ENCODE measurements at regions of chr10 and their contacts with region 1.

Region 1: GRCh38 chr10:75187961-75188426 is 22.6 kb upstream of the VDAC2 start:
- DNase-seq: no peak
- H3K4me3 ChIP-seq: no peak overlapping the region
- H3K27ac ChIP-seq: no peak overlapping the region
- H3K4me1 ChIP-seq: peaks cover 0 to 8% of the 10 kb centered on the region in 2 donors
- H3K27me3 ChIP-seq: no peaks in the 10 kb centered on the region
- CTCF ChIP-seq: peak; percentile 47 to 71 (median 55)

Region 2: DNA sequence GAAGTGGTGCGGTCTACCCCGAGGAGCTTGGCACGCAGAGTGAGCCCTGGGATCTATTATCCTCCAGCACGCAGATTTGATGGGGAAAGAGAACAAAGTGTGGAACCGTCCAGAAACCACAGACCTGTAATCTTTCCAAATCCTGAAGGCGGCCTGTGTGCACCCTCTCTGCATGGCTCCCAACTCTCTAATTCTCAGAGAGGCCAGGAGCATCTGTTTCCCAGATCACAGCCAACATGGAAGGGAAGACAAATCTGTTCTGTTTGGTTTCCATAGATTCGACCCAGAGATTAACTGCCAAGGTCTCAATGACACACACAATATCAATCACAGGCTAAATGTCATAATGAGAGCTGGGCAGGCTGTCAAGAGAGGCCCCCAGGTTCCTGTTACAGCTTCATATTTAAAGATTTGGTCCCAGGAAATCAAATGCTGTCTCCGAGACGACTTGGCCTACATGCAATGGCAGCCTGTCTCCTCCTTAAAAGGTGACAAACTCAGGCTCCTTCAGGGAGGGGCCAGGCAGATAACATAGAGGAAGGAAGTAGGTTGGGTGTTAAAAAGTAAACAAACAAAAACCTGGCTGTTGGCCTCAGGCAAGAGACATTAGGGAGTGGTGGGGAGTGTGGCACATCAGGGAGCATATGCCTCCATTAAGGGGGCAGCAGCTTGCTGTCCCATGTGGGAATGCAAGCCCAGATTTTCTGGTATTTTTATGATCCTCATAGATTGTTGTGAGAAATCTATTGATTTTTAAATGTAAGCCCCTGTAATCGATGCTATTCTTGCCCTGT is 125.3 kb before region 1 on chr10:
- intact Hi-C with region 1: no loop called
- DNase-seq: no peak
- H3K4me3 ChIP-seq: no peak overlapping the region
- H3K27ac ChIP-seq: no peak overlapping the region
- H3K4me1 ChIP-seq: no peaks in the 10 kb centered on the region
- H3K27me3 ChIP-seq: no peaks in the 10 kb centered on the region
- CTCF ChIP-seq: no peak

Region 3: GRCh38 chr10:75210282-75211006 is 22.4 kb after region 1 on chr10 and contains the start of gene VDAC2:
- intact Hi-C with region 1: loop called (anchors 2 kb)
- DNase-seq: peak; percentile 57 to 94
- H3K4me3 ChIP-seq: peak within 1 kb of the TSS; percentile 84 to 94
- H3K27ac ChIP-seq: peak within 1 kb of the TSS; percentile 98 to 100
- H3K4me1 ChIP-seq: peaks cover 10 to 23% of the 10 kb centered on the region in 2 donors
- H3K27me3 ChIP-seq: no peaks in the 10 kb centered on the region
- CTCF ChIP-seq: no peak
- total RNA-seq, gene VDAC2: 14.4 TPM

Region 4: DNA sequence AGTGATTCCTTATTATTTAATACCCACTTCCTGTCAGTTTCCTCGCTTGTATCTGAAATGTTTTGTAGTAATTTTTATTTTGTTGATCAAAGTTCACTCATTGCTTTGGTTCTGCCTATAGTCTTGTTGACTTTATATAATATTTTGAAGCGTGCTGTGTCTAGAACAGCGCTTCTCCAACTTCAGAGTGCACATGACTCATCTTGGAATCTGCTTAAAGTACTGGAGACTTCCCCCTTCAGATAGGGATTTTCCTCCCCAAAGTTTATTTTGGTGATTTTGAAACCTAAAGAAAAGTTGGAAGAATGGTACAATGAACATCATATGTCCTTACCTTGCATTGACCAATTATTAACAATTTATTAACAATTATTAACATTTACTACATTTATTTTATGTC is 42.0 kb after region 1 on chr10:
- intact Hi-C with region 1: loop called (anchors 1 kb)
- DNase-seq: no peak
- H3K4me3 ChIP-seq: no peak overlapping the region
- H3K27ac ChIP-seq: peak overlapping the region in 1 of 2 donors; percentile 48
- H3K4me1 ChIP-seq: peaks cover 17 to 25% of the 10 kb centered on the region in 2 donors
- H3K27me3 ChIP-seq: no peaks in the 10 kb centered on the region
- CTCF ChIP-seq: no peak